PC-3 (cell line): ENCODE measurements at regions of chr3 and their contacts with region 1.

Region 1: GRCh38 chr3:127865941-127866340 is 43.6 kb upstream of the MGLL start:
- DNase-seq: peak; percentile 56
- ATAC-seq: peak; percentile 69
- H3K4me3 ChIP-seq: no peak overlapping the region
- H3K27ac ChIP-seq: no peak overlapping the region
- H3K4me1 ChIP-seq: peaks cover 20% of the 10 kb centered on the region
- H3K27me3 ChIP-seq: no peaks in the 10 kb centered on the region
- CTCF ChIP-seq: 0 out of 2 replicates have a peak, but pooled peaks have one; percentile 18

Region 2: DNA sequence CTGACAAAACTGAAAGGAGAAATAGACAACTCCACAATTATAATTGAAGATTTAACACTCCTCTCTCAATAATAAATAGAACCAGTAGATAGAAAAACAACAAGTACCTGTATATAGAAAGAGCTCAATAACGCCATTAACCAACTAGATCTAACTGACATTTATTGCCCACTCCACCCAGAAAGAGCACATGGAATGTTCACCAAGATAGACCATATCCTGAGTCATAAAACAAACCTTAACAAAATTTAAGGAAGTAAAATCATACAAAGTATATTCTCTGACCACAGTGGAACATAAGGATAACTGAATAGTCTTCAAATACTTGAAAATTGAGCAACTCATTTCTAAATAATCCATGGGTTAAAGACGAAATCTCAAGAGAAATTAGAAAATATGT is 74.2 kb after region 1 on chr3:
- CTCF ChIA-PET with region 1: no interaction called
- POLR2A ChIA-PET with region 1: no interaction called
- intact Hi-C with region 1: loop called (anchors 5 kb)
- DNase-seq: peak; percentile 58
- ATAC-seq: peak; percentile 85
- H3K4me3 ChIP-seq: no peak overlapping the region
- H3K27ac ChIP-seq: 0 out of 2 replicates have a peak overlapping the region, but pooled peaks have one; percentile 3
- H3K4me1 ChIP-seq: peaks cover 14% of the 10 kb centered on the region
- H3K27me3 ChIP-seq: no peaks in the 10 kb centered on the region
- CTCF ChIP-seq: no peak